Body of pancreas (tissue), 4 donors: ENCODE measurements at regions of chr13 and their contacts with region 1.

Region 1: GRCh38 chr13:49436890-49437289 is 7.0 kb downstream of the CAB39L start:
- DNase-seq: peak in 3 of 4 donors; percentile 17 to 43 (median 21)
- ATAC-seq: peak; percentile 72
- H3K4me3 ChIP-seq: no peak overlapping the region
- H3K27ac ChIP-seq: no peak overlapping the region
- H3K4me1 ChIP-seq: no peaks in the 10 kb centered on the region
- H3K27me3 ChIP-seq: no peaks in the 10 kb centered on the region
- CTCF ChIP-seq: peak in 4 of 7 experiments; percentile 36 to 56 (median 40)
- POLR2A ChIP-seq: no peak

Region 2: DNA sequence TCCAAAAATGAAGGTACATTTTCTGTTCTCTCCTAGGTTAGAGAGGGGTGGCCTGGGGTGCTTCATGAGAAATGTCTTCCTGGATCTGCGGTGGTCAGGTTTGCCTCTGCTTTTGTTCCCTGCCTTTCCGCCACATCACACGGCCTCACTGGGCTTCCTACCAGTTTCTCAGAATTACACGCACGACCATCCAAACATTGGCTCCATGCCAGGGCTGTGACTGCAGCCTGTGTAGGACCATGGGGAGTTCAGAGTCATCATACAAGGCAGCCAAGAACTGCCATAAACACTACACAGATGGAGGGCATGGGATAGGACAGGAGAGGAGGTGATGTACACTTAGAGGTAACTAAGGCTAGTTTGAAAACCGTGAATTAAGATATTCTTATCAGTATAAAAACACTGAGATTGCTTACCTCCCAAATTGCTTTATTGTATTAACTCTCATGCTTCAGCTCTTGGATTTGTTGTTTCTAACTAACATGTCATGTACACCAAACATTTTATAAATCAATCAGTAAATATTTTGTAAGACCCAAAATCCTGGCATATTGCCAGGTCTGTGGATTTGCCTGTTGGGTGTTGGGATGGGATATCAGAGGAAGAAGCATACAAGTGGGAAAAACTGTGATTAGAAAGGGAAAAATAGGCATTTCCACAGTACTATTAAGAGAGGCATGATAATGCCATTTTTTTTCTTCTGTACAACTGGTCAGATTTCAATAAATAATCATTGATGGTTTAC is 144.0 kb before region 1 on chr13:
- intact Hi-C with region 1: loop called (anchors 10 kb)
- DNase-seq: peak in 3 of 4 donors; percentile 33 to 52 (median 39)
- ATAC-seq: no peak
- H3K4me3 ChIP-seq: no peak overlapping the region
- H3K27ac ChIP-seq: no peak overlapping the region
- H3K4me1 ChIP-seq: no peaks in the 10 kb centered on the region
- H3K27me3 ChIP-seq: no peaks in the 10 kb centered on the region
- CTCF ChIP-seq: no peak
- POLR2A ChIP-seq: no peak

Region 3: GRCh38 chr13:49395451-49395865 is 41.4 kb before region 1 on chr13:
- intact Hi-C with region 1: no loop called
- DNase-seq: peak in 1 of 4 donors; percentile 8
- ATAC-seq: no peak
- H3K4me3 ChIP-seq: no peak overlapping the region
- H3K27ac ChIP-seq: peak overlapping the region in 1 of 4 donors; percentile 32
- H3K4me1 ChIP-seq: peaks cover 15% of the 10 kb centered on the region
- H3K27me3 ChIP-seq: no peaks in the 10 kb centered on the region
- CTCF ChIP-seq: no peak
- POLR2A ChIP-seq: no peak